Gastrocnemius medialis (tissue), 4 donors: ENCODE measurements at regions of chr5 and their contacts with region 1.

Region 1: GRCh38 chr5:138725138-138725833 is 27.9 kb upstream of the CTNNA1 start:
- DNase-seq: peak; percentile 19 to 66
- ATAC-seq: peak; percentile 69 to 84
- H3K4me3 ChIP-seq: no peak overlapping the region
- H3K27ac ChIP-seq: peak overlapping the region; percentile 14 to 65 (median 38)
- H3K4me1 ChIP-seq: peaks cover 24 to 37% of the 10 kb centered on the region in 2 donors
- H3K27me3 ChIP-seq: no peaks in the 10 kb centered on the region
- CTCF ChIP-seq: peak in 1 of 5 experiments; percentile 33
- POLR2A ChIP-seq: no peak

Region 2: DNA sequence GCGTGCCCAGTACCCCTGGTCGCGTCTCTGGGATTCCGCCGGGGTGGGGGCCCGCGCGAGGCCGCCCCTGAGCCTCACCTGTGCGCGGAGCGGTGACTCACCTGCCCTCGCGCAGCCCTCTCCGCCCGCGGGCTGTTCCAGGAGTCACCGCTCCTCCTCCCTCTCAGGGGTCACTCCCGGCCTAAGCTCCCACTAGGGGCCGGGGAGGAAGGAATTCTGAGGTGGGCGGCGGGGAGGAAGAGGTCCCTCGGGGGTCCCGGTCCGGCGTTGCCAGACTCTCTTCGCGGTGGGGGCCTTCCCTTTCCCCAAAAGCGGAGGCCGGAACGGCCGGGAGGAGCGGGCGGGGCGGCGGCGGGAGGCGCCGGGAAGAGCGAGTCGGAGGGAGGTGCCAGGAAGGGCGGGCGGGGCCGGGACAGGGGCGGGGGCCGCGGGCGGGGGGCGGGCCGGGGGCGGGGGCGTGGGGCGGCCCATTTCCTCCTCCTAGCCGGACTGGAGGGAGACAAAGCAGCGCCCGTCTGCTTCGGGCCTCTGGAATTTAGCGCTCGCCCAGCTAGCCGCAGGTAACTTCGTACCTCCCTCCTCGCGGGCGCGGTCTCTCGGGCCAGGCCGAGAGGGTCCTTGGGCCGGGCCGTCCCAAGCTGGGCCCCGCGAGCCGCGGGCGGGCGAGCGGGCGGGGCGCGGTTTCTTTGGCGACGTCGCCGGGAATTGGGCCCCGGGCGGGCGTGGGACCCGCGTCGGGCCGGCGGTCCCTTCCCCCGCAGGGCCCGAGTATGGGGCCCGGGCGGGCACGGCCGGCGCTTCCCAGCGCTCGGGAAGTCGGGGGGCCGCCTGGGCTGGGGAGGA is 27.9 kb after region 1 on chr5 and contains the start of gene CTNNA1:
- in situ Hi-C with region 1: no loop called
- intact Hi-C with region 1: loop called (anchors 2 kb)
- DNase-seq: peak; percentile 66 to 80
- ATAC-seq: peak; percentile 85 to 87
- H3K4me3 ChIP-seq: peak within 1 kb of the TSS; percentile 75 to 94 (median 79)
- H3K27ac ChIP-seq: peak within 1 kb of the TSS; percentile 87 to 100 (median 96)
- H3K4me1 ChIP-seq: peaks cover 13 to 22% of the 10 kb centered on the region in 2 donors
- H3K27me3 ChIP-seq: no peaks in the 10 kb centered on the region
- CTCF ChIP-seq: peak in 1 of 5 experiments; percentile 11
- POLR2A ChIP-seq: peak; percentile 76 to 84
- total RNA-seq, gene CTNNA1: 92.6 to 164 (median 114) TPM